K562 (cell line): ENCODE measurements at regions of chr5 and their contacts with region 1.

Region 1: DNA sequence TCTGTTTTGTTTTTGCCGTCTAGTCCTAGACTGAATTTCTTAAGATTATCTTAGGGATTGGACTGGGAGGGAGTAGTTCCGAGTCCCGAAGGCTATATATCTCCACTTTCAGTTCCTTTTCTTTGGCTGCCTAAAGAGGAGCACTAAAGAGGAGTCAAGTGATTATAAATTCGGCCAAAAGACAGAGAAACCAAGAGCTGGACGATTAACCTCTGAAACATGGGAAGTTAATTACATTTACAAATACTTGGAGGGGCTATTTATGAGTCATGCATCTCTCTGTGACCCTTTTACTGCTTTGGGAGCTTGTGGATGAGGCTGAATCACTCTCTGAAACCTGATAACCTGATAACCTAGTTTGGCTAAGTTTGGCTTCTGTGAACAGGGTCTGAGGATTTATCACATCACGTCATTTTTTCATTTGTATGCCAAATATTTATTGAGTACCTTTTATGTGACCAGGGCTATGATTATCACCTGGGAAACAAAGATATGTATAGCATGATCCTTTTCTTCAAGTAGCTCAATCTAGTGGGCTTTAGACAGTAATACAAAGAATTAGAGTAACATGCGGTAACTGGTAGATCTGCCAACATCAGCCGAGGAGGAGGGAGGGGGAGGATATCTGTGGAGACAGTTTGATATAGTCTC is 180.9 kb downstream of the CD180 start:
- DNase-seq: peak in 1 of 4 experiments; percentile 35
- ATAC-seq: peak; percentile 50
- H3K4me3 ChIP-seq: no peak overlapping the region
- H3K27ac ChIP-seq: no peak overlapping the region
- H3K4me1 ChIP-seq: peaks cover 0 to 29% of the 10 kb centered on the region in 2 experiments; a peak in 4 of 5 replicates
- H3K27me3 ChIP-seq: no peaks in the 10 kb centered on the region
- CTCF ChIP-seq: no peak
- EP300 ChIP-seq: no peak
- POLR2A ChIP-seq: no peak
- RAD21 ChIP-seq: no peak

Region 2: GRCh38 chr5:67003935-67004729 is 11.5 kb before region 1 on chr5:
- CTCF ChIA-PET with region 1: no interaction called
- POLR2A ChIA-PET with region 1: interaction called, 28 read pairs
- in situ Hi-C with region 1: no loop called
- intact Hi-C with region 1: no loop called
- DNase-seq: peak; percentile 78 to 98 (median 82)
- ATAC-seq: peak; percentile 88
- H3K4me3 ChIP-seq: peak overlapping the region; percentile 55
- H3K27ac ChIP-seq: peak overlapping the region; percentile 93
- H3K4me1 ChIP-seq: peaks cover 4 to 29% of the 10 kb centered on the region in 2 experiments
- H3K27me3 ChIP-seq: no peaks in the 10 kb centered on the region
- CTCF ChIP-seq: no peak
- EP300 ChIP-seq: peak; percentile 91
- POLR2A ChIP-seq: peak; percentile 59
- RAD21 ChIP-seq: no peak

Region 3: GRCh38 chr5:67431191-67431590 is 415.5 kb after region 1 on chr5:
- CTCF ChIA-PET with region 1: no interaction called
- POLR2A ChIA-PET with region 1: no interaction called
- in situ Hi-C with region 1: no loop called
- intact Hi-C with region 1: no loop called
- DNase-seq: no peak
- ATAC-seq: no peak
- H3K4me3 ChIP-seq: no peak overlapping the region
- H3K27ac ChIP-seq: no peak overlapping the region
- H3K4me1 ChIP-seq: no peaks in the 10 kb centered on the region
- H3K27me3 ChIP-seq: no peaks in the 10 kb centered on the region
- CTCF ChIP-seq: no peak
- EP300 ChIP-seq: no peak
- POLR2A ChIP-seq: no peak
- RAD21 ChIP-seq: no peak